ENCODE measurements at regions of chr3 and their contacts with region 1.

Region 1: GRCh38 chr3:157532529-157533297 is 29.5 kb upstream of the VEPH1 start:
- DNase-seq: peak; percentile 64 to 83 (median 81)
- H3K4me3 ChIP-seq: no peak overlapping the region
- H3K27ac ChIP-seq: no peak overlapping the region
- H3K4me1 ChIP-seq: peaks cover 0 to 3% (median 0%) of the 10 kb centered on the region in 4 experiments
- H3K27me3 ChIP-seq: no peaks in the 10 kb centered on the region

Region 2: DNA sequence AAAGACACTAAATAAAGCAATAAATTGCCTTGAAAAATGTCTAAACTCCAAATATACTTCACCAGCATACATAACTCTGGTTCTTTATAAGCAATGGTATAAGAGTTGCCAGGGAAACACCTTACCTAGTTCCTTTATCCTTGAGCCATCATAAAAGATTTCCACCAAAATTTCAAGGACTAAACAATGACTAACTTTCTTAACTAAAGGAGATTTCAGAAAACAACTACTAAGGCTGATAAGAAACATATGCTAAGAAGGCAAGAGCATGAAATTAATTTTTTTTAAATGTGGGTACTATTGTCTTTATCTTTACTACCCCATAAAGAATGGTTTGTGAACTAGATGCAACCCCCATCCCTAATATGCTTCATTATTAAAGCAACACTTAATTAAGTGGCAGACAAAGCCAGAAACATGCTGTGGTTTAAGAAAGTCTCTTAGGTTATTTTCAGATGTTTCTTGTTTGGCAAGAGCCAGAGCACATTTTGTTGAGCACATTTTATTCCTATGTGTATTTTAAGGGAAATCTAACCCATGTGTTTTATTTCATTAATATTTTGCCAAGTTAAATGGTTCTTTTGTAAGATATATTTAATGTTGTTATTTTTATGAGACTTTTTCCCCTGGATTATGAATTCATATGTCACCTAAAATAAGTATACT is 12.1 kb before region 1 on chr3:
- CTCF ChIA-PET with region 1: interaction called, 20 read pairs
- POLR2A ChIA-PET with region 1: no interaction called
- DNase-seq: no peak
- H3K4me3 ChIP-seq: no peak overlapping the region
- H3K27ac ChIP-seq: no peak overlapping the region
- H3K4me1 ChIP-seq: no peaks in the 10 kb centered on the region
- H3K27me3 ChIP-seq: no peaks in the 10 kb centered on the region

Region 3: GRCh38 chr3:157542711-157543500 is 10.2 kb after region 1 on chr3:
- CTCF ChIA-PET with region 1: interaction called, 23 read pairs
- POLR2A ChIA-PET with region 1: no interaction called
- DNase-seq: peak; percentile 60 to 79 (median 76)
- H3K4me3 ChIP-seq: peak overlapping the region; percentile 23 to 65 (median 48)
- H3K27ac ChIP-seq: no peak overlapping the region
- H3K4me1 ChIP-seq: peaks cover 0 to 12% (median 9%) of the 10 kb centered on the region in 4 experiments
- H3K27me3 ChIP-seq: peaks cover 0 to 13% (median 0%) of the 10 kb centered on the region in 5 experiments

Region 4: GRCh38 chr3:157572559-157573270 is 40.0 kb after region 1 on chr3:
- CTCF ChIA-PET with region 1: interaction called, 109 read pairs
- POLR2A ChIA-PET with region 1: no interaction called
- DNase-seq: peak; percentile 46 to 62 (median 58)
- H3K4me3 ChIP-seq: no peak overlapping the region
- H3K27ac ChIP-seq: no peak overlapping the region
- H3K4me1 ChIP-seq: no peaks in the 10 kb centered on the region
- H3K27me3 ChIP-seq: no peaks in the 10 kb centered on the region

Region 5: DNA sequence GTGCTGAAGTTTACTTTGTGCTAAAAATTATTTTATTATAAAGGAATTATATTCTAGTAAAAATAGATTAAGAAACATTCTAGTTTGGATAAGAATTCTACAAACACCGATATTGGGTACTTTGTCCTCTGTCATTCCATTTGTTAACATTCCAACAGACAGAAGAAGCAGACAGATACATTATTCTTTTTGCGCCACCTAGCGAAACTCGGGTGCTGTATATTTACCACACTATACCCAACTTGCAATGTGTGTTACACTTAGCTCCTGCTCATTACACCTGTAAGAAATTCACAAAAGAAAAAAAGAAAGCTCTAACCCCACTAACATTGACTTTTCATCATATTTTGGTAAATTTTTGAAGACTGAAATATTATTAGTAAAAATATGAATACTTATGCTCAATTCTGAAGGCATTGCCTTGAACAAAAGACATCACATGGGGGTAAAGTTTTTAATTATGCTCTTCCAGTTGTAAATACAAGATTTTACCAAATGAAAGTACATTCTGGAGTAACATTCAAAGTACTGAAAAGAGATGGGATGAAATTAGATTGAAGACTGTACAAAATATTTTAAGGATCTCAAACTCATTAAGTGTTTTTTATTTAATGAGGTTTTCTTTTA is 901.8 kb after region 1 on chr3:
- CTCF ChIA-PET with region 1: interaction called, 10 read pairs
- POLR2A ChIA-PET with region 1: no interaction called
- DNase-seq: peak; percentile 59 to 74 (median 69)
- H3K4me3 ChIP-seq: no peak overlapping the region
- H3K27ac ChIP-seq: no peak overlapping the region
- H3K4me1 ChIP-seq: no peaks in the 10 kb centered on the region
- H3K27me3 ChIP-seq: no peaks in the 10 kb centered on the region

Region 6: DNA sequence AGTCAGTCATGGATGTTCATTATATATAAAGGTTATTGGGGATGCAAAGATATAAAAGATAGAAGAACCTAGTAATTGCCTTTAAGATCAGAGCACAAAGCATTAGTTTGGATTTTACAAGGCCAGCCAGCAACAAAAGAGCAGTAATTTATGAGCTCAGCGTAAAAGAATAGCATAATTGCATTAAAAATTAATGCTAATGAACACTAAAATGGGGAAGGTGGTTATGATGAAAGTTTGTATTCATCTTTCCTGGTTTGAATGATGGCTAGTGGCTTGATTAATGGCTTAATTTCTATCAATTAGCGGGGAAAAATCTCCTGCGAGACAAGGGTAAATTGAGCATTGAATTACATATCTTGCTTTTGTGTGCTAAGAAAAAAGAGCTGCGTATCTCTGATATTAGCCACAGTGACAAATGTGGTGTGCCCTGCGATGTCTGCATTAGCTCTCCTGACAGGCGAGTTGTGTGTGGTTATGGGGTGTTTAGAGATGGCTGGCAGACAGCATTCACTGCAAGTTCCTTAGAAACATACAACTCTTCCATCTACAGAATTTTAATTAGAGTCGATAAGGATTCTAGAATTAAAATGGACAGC is 995.5 kb after region 1 on chr3:
- CTCF ChIA-PET with region 1: interaction called, 12 read pairs
- POLR2A ChIA-PET with region 1: no interaction called
- DNase-seq: peak in 1 of 3 donors; percentile 24
- H3K4me3 ChIP-seq: no peak overlapping the region
- H3K27ac ChIP-seq: no peak overlapping the region
- H3K4me1 ChIP-seq: no peaks in the 10 kb centered on the region
- H3K27me3 ChIP-seq: no peaks in the 10 kb centered on the region

Measured in common myeloid progenitor, CD34-positive (primary cell).